Ascending aorta (tissue), 2 donors: ENCODE measurements at regions of chr10 and their contacts with region 1.

Region 1: DNA sequence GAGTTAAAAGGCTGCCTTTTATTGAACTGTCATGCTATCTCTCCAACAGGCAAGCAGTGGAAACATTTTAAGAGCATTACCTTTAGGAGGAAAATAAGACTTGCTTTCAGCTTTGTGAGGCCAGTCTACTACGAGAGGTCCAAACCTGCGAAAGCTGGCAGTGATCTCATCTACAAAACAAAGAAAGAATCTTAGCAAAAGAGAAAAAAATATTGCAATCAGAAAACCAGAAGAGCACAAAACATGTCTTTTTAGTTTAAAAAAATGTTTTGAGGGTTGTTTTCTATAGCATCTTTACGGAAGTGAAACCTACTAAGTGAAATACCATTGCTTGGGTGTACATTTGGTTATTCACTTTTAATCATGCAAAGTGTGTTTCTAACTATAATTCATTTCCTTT is 147.9 kb downstream of the CPEB3 start:
- DNase-seq: no peak
- H3K4me3 ChIP-seq: peak overlapping the region in 1 of 2 donors; percentile 22
- H3K27ac ChIP-seq: peak overlapping the region; percentile 83 to 84
- H3K4me1 ChIP-seq: peaks cover 7 to 38% of the 10 kb centered on the region in 2 donors
- H3K27me3 ChIP-seq: no peaks in the 10 kb centered on the region
- CTCF ChIP-seq: no peak

Region 2: GRCh38 chr10:92103376-92104090 is 39.4 kb before region 1 on chr10:
- intact Hi-C with region 1: loop called (anchors 5 kb)
- DNase-seq: no peak
- H3K4me3 ChIP-seq: no peak overlapping the region
- H3K27ac ChIP-seq: no peak overlapping the region
- H3K4me1 ChIP-seq: peaks cover 3 to 25% of the 10 kb centered on the region in 2 donors
- H3K27me3 ChIP-seq: no peaks in the 10 kb centered on the region
- CTCF ChIP-seq: no peak

Region 3: DNA sequence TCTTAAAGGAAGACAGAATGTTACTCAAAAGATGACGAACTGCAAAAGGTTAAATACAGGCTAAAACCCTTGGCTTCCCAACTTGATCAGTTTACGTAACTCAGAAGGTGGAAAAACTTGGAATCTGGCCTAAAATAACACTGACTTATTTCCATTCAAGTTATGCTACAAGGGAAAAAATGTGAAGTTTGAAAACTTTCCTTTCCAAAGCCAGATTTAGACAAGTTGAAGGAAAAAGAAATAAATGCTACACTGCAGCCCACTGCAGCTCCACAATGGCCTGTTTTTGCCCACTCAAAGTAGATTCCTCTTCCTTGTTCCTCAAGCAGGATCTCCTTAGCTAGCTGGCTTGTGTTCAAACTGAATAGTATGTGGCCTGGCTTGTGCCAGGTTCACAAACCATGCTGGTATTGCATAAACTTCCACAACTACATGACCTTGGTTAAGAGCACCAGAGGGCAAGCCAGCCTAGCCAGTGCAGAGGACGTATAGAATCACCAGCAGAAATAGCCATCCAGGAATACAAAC is 18.3 kb before region 1 on chr10:
- intact Hi-C with region 1: loop called (anchors 2 kb)
- DNase-seq: peak in 1 of 2 donors; percentile 67
- H3K4me3 ChIP-seq: no peak overlapping the region
- H3K27ac ChIP-seq: peak overlapping the region; percentile 74 to 80
- H3K4me1 ChIP-seq: peaks cover 12 to 41% of the 10 kb centered on the region in 2 donors
- H3K27me3 ChIP-seq: no peaks in the 10 kb centered on the region
- CTCF ChIP-seq: no peak